ENCODE measurements at regions of chr1 and their contacts with region 1.

Region 1: DNA sequence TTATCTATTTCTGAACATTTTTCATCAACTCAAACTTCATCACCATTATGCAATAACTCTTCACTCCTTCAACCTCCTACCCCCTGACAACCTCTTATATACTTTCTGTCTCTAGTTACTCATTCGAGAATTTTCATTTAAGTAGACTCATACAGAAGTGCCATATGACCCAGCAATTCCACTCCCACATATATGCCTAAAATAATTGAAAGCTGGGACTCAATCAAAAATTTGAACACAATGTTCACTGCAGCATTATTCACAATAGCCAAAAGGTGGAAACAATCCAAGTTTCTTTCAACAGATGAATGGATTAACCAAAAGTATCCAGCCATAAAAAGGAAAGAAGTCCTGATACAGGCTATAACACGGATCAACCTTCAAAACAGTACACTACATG is 24.1 kb downstream of the COL11A1 start:
- DNase-seq: no peak
- ATAC-seq: no peak
- H3K4me3 ChIP-seq: no peak overlapping the region
- H3K4me3 Mint-ChIP-seq: no peak overlapping the region
- H3K27ac ChIP-seq: no peak overlapping the region
- H3K27ac Mint-ChIP-seq: no peak overlapping the region
- H3K4me1 ChIP-seq: no peaks in the 10 kb centered on the region
- H3K4me1 Mint-ChIP-seq: no peaks in the 10 kb centered on the region
- H3K27me3 ChIP-seq: no peaks in the 10 kb centered on the region
- H3K27me3 Mint-ChIP-seq: no peaks in the 10 kb centered on the region
- CTCF ChIP-seq: no peak

Region 2: GRCh38 chr1:103063921-103064320 is 20.3 kb before region 1 on chr1:
- CTCF ChIA-PET with region 1: no interaction called
- POLR2A ChIA-PET with region 1: no interaction called
- intact Hi-C with region 1: loop called in 1 of 2 experiments (anchors 1 kb)
- DNase-seq: no peak
- ATAC-seq: no peak
- H3K4me3 ChIP-seq: no peak overlapping the region
- H3K4me3 Mint-ChIP-seq: no peak overlapping the region
- H3K27ac ChIP-seq: no peak overlapping the region
- H3K27ac Mint-ChIP-seq: no peak overlapping the region
- H3K4me1 ChIP-seq: no peaks in the 10 kb centered on the region
- H3K4me1 Mint-ChIP-seq: no peaks in the 10 kb centered on the region
- H3K27me3 ChIP-seq: no peaks in the 10 kb centered on the region
- H3K27me3 Mint-ChIP-seq: no peaks in the 10 kb centered on the region
- CTCF ChIP-seq: no peak

Region 3: GRCh38 chr1:103616362-103616761 is 532.2 kb after region 1 on chr1:
- CTCF ChIA-PET with region 1: no interaction called
- POLR2A ChIA-PET with region 1: no interaction called
- intact Hi-C with region 1: loop called in 1 of 2 experiments (anchors 5 kb)
- DNase-seq: no peak
- ATAC-seq: no peak
- H3K4me3 ChIP-seq: no peak overlapping the region
- H3K4me3 Mint-ChIP-seq: no peak overlapping the region
- H3K27ac ChIP-seq: no peak overlapping the region
- H3K27ac Mint-ChIP-seq: no peak overlapping the region
- H3K4me1 ChIP-seq: no peaks in the 10 kb centered on the region
- H3K4me1 Mint-ChIP-seq: no peaks in the 10 kb centered on the region
- H3K27me3 ChIP-seq: no peaks in the 10 kb centered on the region
- H3K27me3 Mint-ChIP-seq: no peaks in the 10 kb centered on the region
- CTCF ChIP-seq: no peak

Measured in CD8-positive, alpha-beta T cell (primary cell).